SK-N-SH (cell line): ENCODE measurements at regions of chr11 and their contacts with region 1.

Region 1: GRCh38 chr11:46392421-46393230 is 1.1 kb upstream of the CHRM4 start:
- DNase-seq: peak; percentile 80
- H3K4me3 ChIP-seq: peak overlapping the region; percentile 52 to 60
- H3K27ac ChIP-seq: no peak overlapping the region
- H3K4me1 ChIP-seq: peaks cover 0 to 27% of the 10 kb centered on the region in 2 experiments; a peak in 2 of 4 replicates
- H3K27me3 ChIP-seq: peaks cover 15% of the 10 kb centered on the region
- CTCF ChIP-seq: no peak
- EP300 ChIP-seq: no peak
- RAD21 ChIP-seq: no peak

Region 2: GRCh38 chr11:45872513-45873356 is 519.9 kb before region 1 on chr11:
- CTCF ChIA-PET with region 1: no interaction called
- POLR2A ChIA-PET with region 1: no interaction called
- DNase-seq: peak; percentile 88
- H3K4me3 ChIP-seq: peak overlapping the region in 1 of 2 experiments; percentile 41; a peak in 1 of 4 replicates
- H3K27ac ChIP-seq: peak overlapping the region; percentile 70 to 83
- H3K4me1 ChIP-seq: peaks cover 9 to 17% of the 10 kb centered on the region in 2 experiments; a peak in 3 of 4 replicates
- H3K27me3 ChIP-seq: no peaks in the 10 kb centered on the region
- CTCF ChIP-seq: peak; percentile 90
- EP300 ChIP-seq: peak in 1 of 2 experiments; percentile 61; a peak in 1 of 4 replicates
- RAD21 ChIP-seq: peak; percentile 93

Region 3: DNA sequence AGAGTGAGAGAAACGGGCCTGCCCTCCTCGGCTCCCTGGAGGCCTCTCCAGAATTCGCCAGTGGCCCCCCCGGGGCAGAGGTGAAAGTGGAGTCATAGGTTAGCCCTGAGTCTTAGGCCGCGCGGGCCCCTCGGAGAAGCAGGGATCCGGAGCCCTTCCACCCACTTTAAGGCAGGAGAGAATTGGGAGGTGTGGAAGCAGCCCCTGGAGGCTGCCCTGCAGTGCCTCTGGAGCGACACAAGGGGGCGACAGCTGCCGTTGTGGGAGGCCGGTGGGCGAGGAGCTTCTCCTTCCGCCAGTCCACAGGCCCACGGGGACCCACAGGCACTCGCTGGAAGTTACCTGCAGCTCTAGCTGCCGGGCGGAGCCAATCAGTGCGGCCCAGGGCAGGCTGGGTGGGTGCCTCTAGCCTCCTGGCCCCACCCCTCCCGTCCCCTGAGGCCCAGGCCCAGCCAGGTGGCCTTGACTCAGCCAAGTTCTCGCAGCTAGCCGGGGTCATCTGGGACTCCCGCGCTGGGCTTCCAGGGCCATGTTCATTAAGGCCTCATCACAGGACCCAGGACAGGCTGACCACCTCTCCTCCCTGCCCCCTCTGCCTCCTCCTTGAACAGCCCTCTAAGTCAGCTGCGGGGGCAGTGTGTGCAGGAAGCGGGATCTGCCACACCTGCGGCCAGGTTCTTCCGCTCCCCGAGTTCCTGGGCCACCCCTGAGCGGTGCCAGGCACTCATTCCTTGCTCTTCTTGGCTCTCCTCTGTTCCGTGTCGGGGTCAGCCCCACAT is 40.4 kb before region 1 on chr11:
- CTCF ChIA-PET with region 1: interaction called, 24 read pairs
- POLR2A ChIA-PET with region 1: no interaction called
- DNase-seq: peak; percentile 85
- H3K4me3 ChIP-seq: no peak overlapping the region; a peak in 1 of 4 replicates
- H3K27ac ChIP-seq: no peak overlapping the region
- H3K4me1 ChIP-seq: peaks cover 14 to 19% of the 10 kb centered on the region in 2 experiments; a peak in 3 of 4 replicates
- H3K27me3 ChIP-seq: no peaks in the 10 kb centered on the region
- CTCF ChIP-seq: peak; percentile 82
- EP300 ChIP-seq: no peak
- RAD21 ChIP-seq: peak; percentile 75

Region 4: DNA sequence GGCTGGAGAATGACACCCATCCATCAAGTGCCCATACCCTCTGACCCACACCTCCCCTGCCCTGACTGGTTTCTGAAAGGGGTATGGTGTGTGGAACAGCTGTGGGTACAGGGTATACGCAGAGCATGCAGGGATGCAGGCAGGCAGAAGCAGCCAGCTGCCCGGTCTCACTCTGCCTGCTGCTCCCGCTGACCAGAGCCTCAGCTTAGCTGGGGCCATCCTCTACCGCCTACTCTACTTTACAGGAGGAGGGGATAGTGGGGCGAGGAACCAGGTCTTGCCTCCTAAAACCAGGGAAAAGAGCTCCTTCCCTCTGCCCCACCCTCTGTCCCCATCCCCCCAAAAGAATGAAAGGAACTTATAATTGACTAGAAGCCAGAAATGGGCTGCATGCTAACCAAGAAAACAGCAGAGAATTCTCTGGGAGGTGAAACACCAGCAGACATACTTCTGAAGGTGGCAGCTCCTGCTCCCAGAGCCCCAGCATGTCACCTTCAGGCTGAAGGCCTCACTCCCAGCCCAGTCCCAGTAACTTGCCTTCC is 11.9 kb after region 1 on chr11:
- CTCF ChIA-PET with region 1: interaction called, 96 read pairs
- POLR2A ChIA-PET with region 1: no interaction called
- DNase-seq: no peak
- H3K4me3 ChIP-seq: no peak overlapping the region
- H3K27ac ChIP-seq: no peak overlapping the region
- H3K4me1 ChIP-seq: peaks cover 0 to 5% of the 10 kb centered on the region in 2 experiments; a peak in 1 of 4 replicates
- H3K27me3 ChIP-seq: no peaks in the 10 kb centered on the region
- CTCF ChIP-seq: no peak
- EP300 ChIP-seq: no peak
- RAD21 ChIP-seq: no peak

Region 5: GRCh38 chr11:46438211-46438610 is 45.6 kb after region 1 on chr11:
- CTCF ChIA-PET with region 1: interaction called, 25 read pairs
- POLR2A ChIA-PET with region 1: no interaction called
- DNase-seq: no peak
- H3K4me3 ChIP-seq: no peak overlapping the region
- H3K27ac ChIP-seq: peak overlapping the region in 1 of 2 experiments; percentile 2; a peak in 1 of 4 replicates
- H3K4me1 ChIP-seq: peaks cover 16 to 20% of the 10 kb centered on the region in 2 experiments; a peak in 2 of 4 replicates
- H3K27me3 ChIP-seq: no peaks in the 10 kb centered on the region
- CTCF ChIP-seq: no peak
- EP300 ChIP-seq: no peak
- RAD21 ChIP-seq: no peak

Region 6: GRCh38 chr11:46504817-46505613 is 112.4 kb after region 1 on chr11:
- CTCF ChIA-PET with region 1: interaction called, 24 read pairs
- POLR2A ChIA-PET with region 1: no interaction called
- DNase-seq: no peak
- H3K4me3 ChIP-seq: no peak overlapping the region
- H3K27ac ChIP-seq: no peak overlapping the region
- H3K4me1 ChIP-seq: peaks cover 0 to 9% of the 10 kb centered on the region in 2 experiments; a peak in 1 of 4 replicates
- H3K27me3 ChIP-seq: no peaks in the 10 kb centered on the region
- CTCF ChIP-seq: no peak
- EP300 ChIP-seq: no peak
- RAD21 ChIP-seq: no peak

Region 7: DNA sequence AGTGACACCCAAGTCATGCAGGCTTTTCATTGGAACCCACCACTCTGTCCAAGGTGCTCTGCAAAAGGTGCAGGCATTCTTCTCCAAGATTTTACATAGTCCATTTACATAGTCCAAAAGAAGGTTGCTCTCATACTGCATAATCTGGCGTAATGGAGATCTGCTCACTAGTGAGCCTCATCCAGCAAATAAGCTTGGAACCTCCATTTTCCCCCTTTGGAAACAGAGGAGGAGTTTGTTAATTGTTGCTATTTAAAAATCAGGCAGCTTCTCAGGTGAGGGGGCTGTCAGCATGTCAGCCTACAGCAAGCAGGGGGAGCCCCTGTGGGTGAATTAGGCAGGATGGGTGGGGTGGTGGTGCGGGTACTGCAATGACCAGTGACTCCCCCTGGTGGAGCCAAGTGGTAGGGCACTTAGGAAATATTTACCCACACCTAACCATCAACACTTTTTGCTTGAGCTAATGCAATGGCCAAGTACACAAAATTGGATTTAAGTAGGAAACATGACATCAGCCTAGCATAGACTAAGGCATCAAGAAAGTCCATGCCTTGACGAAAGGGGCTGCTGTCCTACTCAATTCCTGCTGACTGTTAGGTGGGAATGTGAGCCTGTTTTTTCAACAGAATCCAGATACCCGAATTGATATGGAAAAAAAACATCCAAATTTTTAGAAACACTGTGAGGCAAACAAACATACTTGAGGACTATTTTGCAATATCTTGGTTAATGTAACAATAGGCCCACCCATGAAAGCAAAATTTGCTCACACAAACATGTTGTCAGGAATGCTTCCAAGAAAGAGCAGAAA is 136.7 kb after region 1 on chr11:
- CTCF ChIA-PET with region 1: interaction called, 204 read pairs
- POLR2A ChIA-PET with region 1: no interaction called
- DNase-seq: peak; percentile 83
- H3K4me3 ChIP-seq: peak overlapping the region in 1 of 2 experiments; percentile 23; a peak in 1 of 4 replicates
- H3K27ac ChIP-seq: no peak overlapping the region
- H3K4me1 ChIP-seq: no peaks in the 10 kb centered on the region; a peak in 1 of 4 replicates
- H3K27me3 ChIP-seq: no peaks in the 10 kb centered on the region
- CTCF ChIP-seq: peak; percentile 94
- EP300 ChIP-seq: no peak
- RAD21 ChIP-seq: peak; percentile 75

Region 8: GRCh38 chr11:46611526-46612304 is 219.1 kb after region 1 on chr11:
- CTCF ChIA-PET with region 1: interaction called, 17 read pairs
- POLR2A ChIA-PET with region 1: no interaction called
- DNase-seq: no peak
- H3K4me3 ChIP-seq: no peak overlapping the region
- H3K27ac ChIP-seq: no peak overlapping the region
- H3K4me1 ChIP-seq: peaks cover 5 to 9% of the 10 kb centered on the region in 2 experiments; a peak in 2 of 4 replicates
- H3K27me3 ChIP-seq: no peaks in the 10 kb centered on the region
- CTCF ChIP-seq: no peak
- EP300 ChIP-seq: no peak
- RAD21 ChIP-seq: no peak